Panc1 (cell line): ENCODE measurements at regions of chr14 and their contacts with region 1.

Region 1: GRCh38 chr14:66595394-66595793 is 87.4 kb downstream of the GPHN start:
- DNase-seq: no peak
- ATAC-seq: no peak
- H3K4me3 ChIP-seq: no peak overlapping the region
- H3K27ac ChIP-seq: no peak overlapping the region
- H3K4me1 ChIP-seq: no peaks in the 10 kb centered on the region; the same call in 1 of the 2 replicates
- H3K27me3 ChIP-seq: no peaks in the 10 kb centered on the region
- CTCF ChIP-seq: no peak

Region 2: GRCh38 chr14:66575939-66576338 is 19.5 kb before region 1 on chr14:
- CTCF ChIA-PET with region 1: interaction called, 13 read pairs
- POLR2A ChIA-PET with region 1: no interaction called
- in situ Hi-C with region 1: no loop called
- intact Hi-C with region 1: no loop called
- DNase-seq: no peak
- ATAC-seq: no peak
- H3K4me3 ChIP-seq: no peak overlapping the region
- H3K27ac ChIP-seq: no peak overlapping the region
- H3K4me1 ChIP-seq: no peaks in the 10 kb centered on the region
- H3K27me3 ChIP-seq: no peaks in the 10 kb centered on the region
- CTCF ChIP-seq: no peak

Region 3: GRCh38 chr14:66842911-66843512 is 247.6 kb after region 1 on chr14:
- CTCF ChIA-PET with region 1: no interaction called
- POLR2A ChIA-PET with region 1: no interaction called
- in situ Hi-C with region 1: no loop called
- intact Hi-C with region 1: no loop called
- DNase-seq: no peak
- ATAC-seq: no peak
- H3K4me3 ChIP-seq: no peak overlapping the region
- H3K27ac ChIP-seq: no peak overlapping the region
- H3K4me1 ChIP-seq: no peaks in the 10 kb centered on the region
- H3K27me3 ChIP-seq: no peaks in the 10 kb centered on the region
- CTCF ChIP-seq: no peak